ENCODE measurements at regions of chr11 and their contacts with region 1.

Region 1: GRCh38 chr11:126303623-126304456 is at the start of gene DCPS:
- DNase-seq: peak; percentile 71 to 93 (median 83)
- ATAC-seq: peak; percentile 98
- H3K4me3 ChIP-seq: peak within 1 kb of the TSS; percentile 91
- H3K4me3 Mint-ChIP-seq: peak within 1 kb of the TSS; percentile 87
- H3K27ac ChIP-seq: peak within 1 kb of the TSS; percentile 89 to 91
- H3K27ac Mint-ChIP-seq: peak within 1 kb of the TSS; percentile 85
- H3K4me1 ChIP-seq: peaks cover 39% of the 10 kb centered on the region
- H3K4me1 Mint-ChIP-seq: peaks cover 43% of the 10 kb centered on the region
- H3K27me3 ChIP-seq: no peaks in the 10 kb centered on the region
- H3K27me3 Mint-ChIP-seq: no peaks in the 10 kb centered on the region
- CTCF ChIP-seq: no peak
- total RNA-seq, gene DCPS: 6.2 to 6.3 TPM

Region 2: DNA sequence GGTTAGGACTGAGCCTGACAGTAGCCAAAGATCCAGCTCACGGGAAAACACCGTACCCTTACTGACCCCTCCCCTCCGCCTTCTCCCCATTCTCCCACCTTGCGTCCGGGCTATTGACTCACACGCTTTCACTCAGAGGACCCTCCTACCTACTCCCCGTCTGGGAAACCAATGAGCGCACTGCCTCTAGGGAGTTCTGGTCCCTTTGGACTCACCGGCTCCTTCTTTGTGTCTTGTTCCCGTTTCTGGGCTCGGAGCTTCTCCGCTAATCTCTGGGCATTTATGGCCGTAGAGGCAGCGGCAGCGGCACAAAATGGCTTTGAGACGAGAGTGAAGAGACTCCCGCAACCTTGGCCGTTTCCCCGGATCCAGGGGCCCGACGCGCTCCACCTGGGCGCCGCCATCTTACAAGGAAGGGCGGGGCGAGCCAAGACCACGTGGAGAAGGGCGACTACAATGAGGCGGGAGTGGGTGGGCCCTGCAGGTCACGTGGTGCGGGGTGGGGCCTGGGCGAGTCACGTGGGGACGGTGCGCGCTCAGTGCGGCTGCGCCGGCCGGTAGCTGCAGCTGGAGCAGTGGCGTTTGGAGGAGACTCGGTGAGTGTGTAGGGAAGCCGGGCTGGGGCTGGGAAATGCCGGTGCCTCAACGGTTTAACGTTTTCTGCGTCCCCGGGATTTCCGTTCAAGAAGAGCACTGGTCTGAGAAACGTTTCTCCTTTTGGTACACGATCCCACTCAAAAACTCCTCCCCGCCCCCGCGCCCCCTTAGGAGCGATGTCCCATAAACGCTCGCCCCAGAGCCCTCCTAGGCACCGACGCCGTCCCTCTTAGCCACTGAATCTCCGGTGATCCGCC is 92.4 kb before region 1 on chr11 and contains the starts of genes FAM118B and RPUSD4:
- CTCF ChIA-PET with region 1: interaction called, 3 read pairs
- POLR2A ChIA-PET with region 1: interaction called, 6 read pairs
- intact Hi-C with region 1: loop called in 1 of 2 experiments (anchors 5 kb)
- DNase-seq: peak; percentile 96 to 100 (median 98)
- ATAC-seq: peak; percentile 97
- H3K4me3 ChIP-seq: peak within 1 kb of the TSS; percentile 99
- H3K4me3 Mint-ChIP-seq: peak within 1 kb of the TSS; percentile 100
- H3K27ac ChIP-seq: peak within 1 kb of the TSS; percentile 50 to 78
- H3K27ac Mint-ChIP-seq: peak within 1 kb of the TSS; percentile 93
- H3K4me1 ChIP-seq: peaks cover 21% of the 10 kb centered on the region
- H3K4me1 Mint-ChIP-seq: peaks cover 61% of the 10 kb centered on the region
- H3K27me3 ChIP-seq: no peaks in the 10 kb centered on the region
- H3K27me3 Mint-ChIP-seq: no peaks in the 10 kb centered on the region
- CTCF ChIP-seq: no peak
- total RNA-seq, gene FAM118B: 1.0 to 1.8 TPM
- total RNA-seq, gene RPUSD4: 33.1 to 37.6 TPM

Region 3: GRCh38 chr11:126282736-126283591 is 20.9 kb before region 1 on chr11 and contains the start of gene TIRAP:
- CTCF ChIA-PET with region 1: interaction called, 3 read pairs
- POLR2A ChIA-PET with region 1: interaction called, 34 read pairs
- intact Hi-C with region 1: loop called (anchors 1 to 2 kb)
- DNase-seq: peak; percentile 47 to 84 (median 58)
- ATAC-seq: peak; percentile 54
- H3K4me3 ChIP-seq: peak within 1 kb of the TSS; percentile 89
- H3K4me3 Mint-ChIP-seq: peak within 1 kb of the TSS; percentile 95
- H3K27ac ChIP-seq: peak within 1 kb of the TSS; percentile 80 to 89
- H3K27ac Mint-ChIP-seq: peak within 1 kb of the TSS; percentile 99
- H3K4me1 ChIP-seq: peaks cover 56% of the 10 kb centered on the region
- H3K4me1 Mint-ChIP-seq: peaks cover 59% of the 10 kb centered on the region
- H3K27me3 ChIP-seq: no peaks in the 10 kb centered on the region
- H3K27me3 Mint-ChIP-seq: no peaks in the 10 kb centered on the region
- CTCF ChIP-seq: no peak
- total RNA-seq, gene TIRAP: 7.7 to 7.9 TPM

Region 4: GRCh38 chr11:126318574-126319373 is 14.9 kb after region 1 on chr11:
- CTCF ChIA-PET with region 1: no interaction called
- POLR2A ChIA-PET with region 1: interaction called, 11 read pairs
- intact Hi-C with region 1: no loop called
- DNase-seq: peak in 5 of 14 experiments; percentile 14 to 57 (median 47)
- ATAC-seq: peak; percentile 85
- H3K4me3 ChIP-seq: no peak overlapping the region
- H3K4me3 Mint-ChIP-seq: peak overlapping the region; percentile 12
- H3K27ac ChIP-seq: peak overlapping the region in 1 of 2 donors; percentile 50
- H3K27ac Mint-ChIP-seq: peak overlapping the region; percentile 40
- H3K4me1 ChIP-seq: peaks cover 28% of the 10 kb centered on the region
- H3K4me1 Mint-ChIP-seq: peaks cover 47% of the 10 kb centered on the region
- H3K27me3 ChIP-seq: no peaks in the 10 kb centered on the region
- H3K27me3 Mint-ChIP-seq: no peaks in the 10 kb centered on the region
- CTCF ChIP-seq: no peak

Region 5: GRCh38 chr11:126345759-126346585 is 42.1 kb after region 1 on chr11:
- CTCF ChIA-PET with region 1: no interaction called
- POLR2A ChIA-PET with region 1: no interaction called
- intact Hi-C with region 1: no loop called
- DNase-seq: peak in 2 of 14 experiments; percentile 55 to 69
- ATAC-seq: no peak
- H3K4me3 ChIP-seq: no peak overlapping the region
- H3K4me3 Mint-ChIP-seq: no peak overlapping the region
- H3K27ac ChIP-seq: peak overlapping the region in 1 of 2 donors; percentile 3
- H3K27ac Mint-ChIP-seq: no peak overlapping the region
- H3K4me1 ChIP-seq: no peaks in the 10 kb centered on the region
- H3K4me1 Mint-ChIP-seq: peaks cover 3% of the 10 kb centered on the region
- H3K27me3 ChIP-seq: no peaks in the 10 kb centered on the region
- H3K27me3 Mint-ChIP-seq: no peaks in the 10 kb centered on the region
- CTCF ChIP-seq: no peak

Measured in CD4-positive, alpha-beta T cell (primary cell).